Calu3 (cell line): ENCODE measurements at regions of chr18 and their contacts with region 1.

Region 1: DNA sequence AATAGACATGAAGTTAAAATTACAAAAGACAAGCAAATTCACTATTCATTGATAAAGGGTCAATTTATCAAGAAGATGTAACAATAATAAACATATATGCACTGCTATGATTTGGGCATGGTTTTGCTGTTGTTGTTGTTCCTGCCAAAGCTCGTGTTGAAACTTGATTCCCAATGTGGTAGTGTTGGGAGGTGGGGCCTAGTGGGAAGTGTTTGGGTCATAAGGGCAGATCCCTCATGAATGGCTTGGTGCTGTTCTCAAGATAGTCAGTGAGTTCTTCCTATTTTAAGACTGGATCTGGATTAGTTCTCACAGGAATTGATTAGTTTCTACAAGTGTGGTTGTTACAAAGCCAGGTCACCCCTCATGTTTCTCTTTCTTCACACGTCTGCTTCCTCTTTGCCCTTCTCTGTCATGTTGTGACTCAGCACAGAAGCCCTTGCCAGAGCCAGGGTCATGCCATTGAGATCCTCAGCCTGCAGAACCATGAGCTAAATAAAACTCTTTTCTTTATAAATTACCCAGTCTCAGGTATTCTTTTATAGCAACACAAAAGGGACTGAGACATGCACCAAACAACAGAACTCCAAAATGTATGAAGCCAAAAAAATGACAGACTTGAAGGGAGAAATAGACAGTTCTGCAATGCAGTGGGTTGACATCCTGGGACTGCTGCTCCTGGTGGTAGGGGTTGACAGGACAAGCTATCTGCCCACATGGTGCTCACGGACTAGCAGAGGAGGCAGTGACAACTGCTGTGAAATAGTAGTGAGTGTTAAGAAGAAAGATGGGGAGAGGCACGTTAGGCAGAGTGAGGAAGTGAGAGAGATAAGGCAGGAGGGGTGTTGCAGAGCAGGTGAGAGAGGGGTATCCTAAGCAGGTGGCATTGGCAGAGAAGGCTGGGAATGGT is 18.6 kb upstream of the SKA1 start:
- DNase-seq: peak; percentile 23
- H3K4me3 Mint-ChIP-seq: no peak overlapping the region
- H3K27ac Mint-ChIP-seq: peak overlapping the region; percentile 58
- H3K4me1 Mint-ChIP-seq: peaks cover 14% of the 10 kb centered on the region
- H3K27me3 Mint-ChIP-seq: peaks cover 33% of the 10 kb centered on the region
- CTCF ChIP-seq: no peak

Region 2: DNA sequence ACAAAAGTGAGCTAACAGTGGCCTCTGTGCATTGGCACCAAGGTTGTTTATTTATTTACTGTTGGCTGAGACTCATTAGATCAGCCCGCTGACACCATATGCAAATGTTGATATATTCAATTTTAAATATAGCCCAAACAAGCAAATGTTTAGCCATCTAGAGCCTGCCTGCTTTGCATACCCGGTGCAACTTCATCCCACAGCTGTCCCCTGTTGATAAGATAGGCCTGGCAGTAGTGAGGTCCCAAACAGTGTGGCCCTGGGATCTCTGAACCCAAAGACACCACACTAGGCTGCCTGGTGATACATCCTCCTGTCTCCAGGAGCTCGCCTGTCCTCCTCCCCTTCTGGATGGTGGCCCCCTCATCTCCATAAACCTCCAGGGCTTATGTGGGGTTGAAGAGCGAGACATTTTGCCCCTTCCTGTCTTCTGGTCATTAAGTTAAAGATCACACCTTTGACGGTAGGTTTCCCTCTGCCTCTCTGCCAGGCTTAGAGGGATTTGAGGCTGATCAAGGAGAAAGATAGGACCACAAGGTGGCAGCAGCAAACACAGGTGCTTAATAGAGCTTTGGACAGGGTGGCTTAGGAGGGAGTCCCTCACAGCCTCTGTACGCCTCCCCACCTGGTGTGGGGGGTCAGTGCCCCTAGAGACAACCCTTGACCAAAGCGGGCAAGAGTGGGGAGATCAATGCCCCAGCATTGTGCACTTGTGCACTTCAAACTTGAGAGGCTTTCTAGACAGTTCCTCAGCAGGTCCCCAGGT is 137.7 kb before region 1 on chr18:
- CTCF ChIA-PET with region 1: interaction called, 55 read pairs
- intact Hi-C with region 1: loop called (anchors 1 kb)
- DNase-seq: peak; percentile 57
- H3K4me3 Mint-ChIP-seq: no peak overlapping the region
- H3K27ac Mint-ChIP-seq: no peak overlapping the region
- H3K4me1 Mint-ChIP-seq: peaks cover 43% of the 10 kb centered on the region
- H3K27me3 Mint-ChIP-seq: peaks cover 44% of the 10 kb centered on the region
- CTCF ChIP-seq: peak; percentile 64

Region 3: GRCh38 chr18:50281295-50281971 is 74.9 kb before region 1 on chr18 and contains the start of gene MBD1:
- CTCF ChIA-PET with region 1: interaction called, 11 read pairs
- intact Hi-C with region 1: loop called (anchors 5 kb)
- DNase-seq: peak; percentile 96
- H3K4me3 Mint-ChIP-seq: peak within 1 kb of the TSS; percentile 90
- H3K27ac Mint-ChIP-seq: peak within 1 kb of the TSS; percentile 89
- H3K4me1 Mint-ChIP-seq: peaks cover 35% of the 10 kb centered on the region
- H3K27me3 Mint-ChIP-seq: no peaks in the 10 kb centered on the region
- CTCF ChIP-seq: no peak
- total RNA-seq, gene MBD1: 70.5 and 88.0 TPM in 2 replicates

Region 4: DNA sequence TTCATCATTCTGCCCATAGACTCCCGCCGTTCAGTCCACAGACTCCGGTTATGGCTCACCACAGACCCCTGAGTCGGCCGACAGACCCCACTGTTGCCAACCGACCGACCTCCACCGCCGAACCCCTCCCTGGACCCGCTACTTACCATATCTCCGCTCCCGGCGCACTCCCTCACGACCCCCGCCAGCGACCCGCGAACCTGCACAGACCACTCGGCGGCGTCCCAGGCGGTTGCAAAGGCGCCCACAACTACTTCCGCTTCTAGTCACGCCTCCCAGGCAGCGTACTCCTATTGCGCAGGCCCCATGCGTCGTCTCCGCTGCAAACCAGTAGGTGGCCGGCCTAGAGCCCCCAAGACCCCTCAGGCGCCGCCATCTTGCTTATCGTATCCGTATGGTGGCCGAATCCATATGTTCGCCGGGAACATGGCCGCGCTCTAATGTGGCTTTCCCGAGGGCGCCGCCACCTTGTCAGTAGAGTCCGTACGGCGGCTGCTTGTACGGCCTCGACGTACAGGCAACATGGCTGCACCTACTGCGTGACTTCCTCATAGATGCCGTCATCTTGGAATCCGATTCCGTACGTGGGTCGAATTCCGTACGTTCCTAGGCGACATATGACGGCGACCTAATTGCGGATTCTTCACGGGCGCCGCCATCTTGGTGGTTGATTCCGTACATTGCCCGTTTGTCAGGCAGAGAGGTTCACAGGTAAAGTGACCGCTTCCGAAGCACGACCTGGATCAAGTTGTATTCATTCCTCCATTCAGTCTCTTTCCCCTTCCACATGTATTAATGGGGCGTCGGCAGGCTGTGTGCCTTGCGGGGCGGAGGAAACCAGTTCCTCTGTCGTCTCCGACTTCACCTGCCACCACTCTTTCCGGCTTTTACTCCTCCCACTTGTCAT is 68.6 kb before region 1 on chr18 and contains the start of gene CXXC1:
- CTCF ChIA-PET with region 1: interaction called, 3 read pairs
- intact Hi-C with region 1: loop called (anchors 5 kb)
- DNase-seq: peak; percentile 96
- H3K4me3 Mint-ChIP-seq: peak within 1 kb of the TSS; percentile 89
- H3K27ac Mint-ChIP-seq: peak within 1 kb of the TSS; percentile 80
- H3K4me1 Mint-ChIP-seq: peaks cover 28% of the 10 kb centered on the region
- H3K27me3 Mint-ChIP-seq: no peaks in the 10 kb centered on the region
- CTCF ChIP-seq: peak; percentile 63
- total RNA-seq, gene CXXC1: 75.1 and 95.2 TPM in 2 replicates

Region 5: GRCh38 chr18:50307738-50308470 is 48.4 kb before region 1 on chr18:
- CTCF ChIA-PET with region 1: interaction called, 10 read pairs
- intact Hi-C with region 1: no loop called
- DNase-seq: peak; percentile 88
- H3K4me3 Mint-ChIP-seq: peak overlapping the region; percentile 81
- H3K27ac Mint-ChIP-seq: peak overlapping the region; percentile 64
- H3K4me1 Mint-ChIP-seq: peaks cover 35% of the 10 kb centered on the region
- H3K27me3 Mint-ChIP-seq: no peaks in the 10 kb centered on the region
- CTCF ChIP-seq: no peak

Region 6: DNA sequence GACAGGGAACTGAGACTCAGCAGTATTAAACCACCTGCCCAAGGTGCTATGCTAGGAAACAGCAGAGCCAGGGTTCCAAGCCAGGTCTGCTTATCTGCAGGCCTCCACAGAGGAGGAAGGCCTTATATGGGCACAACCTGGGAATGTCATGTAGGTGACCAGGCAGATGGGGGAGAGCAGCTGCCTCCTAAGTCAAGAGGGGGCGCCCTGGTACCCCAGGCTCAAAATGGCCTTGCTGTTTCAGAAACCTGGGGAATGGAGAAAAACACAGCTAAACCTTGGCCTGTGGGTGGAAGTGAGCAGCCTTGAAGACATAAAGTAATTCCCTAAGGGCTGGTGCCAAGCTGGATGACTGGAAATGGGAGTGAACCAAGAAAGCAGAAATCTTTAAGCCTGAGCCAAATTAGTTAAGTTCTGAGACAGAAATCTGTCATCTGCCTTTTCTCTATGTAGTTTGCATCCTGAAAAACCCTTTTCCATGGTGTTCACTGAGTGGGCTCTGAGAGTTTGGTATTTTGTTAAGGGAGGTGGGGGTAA is 282.7 kb after region 1 on chr18:
- CTCF ChIA-PET with region 1: no interaction called
- intact Hi-C with region 1: no loop called
- DNase-seq: no peak
- H3K4me3 Mint-ChIP-seq: no peak overlapping the region
- H3K27ac Mint-ChIP-seq: no peak overlapping the region
- H3K4me1 Mint-ChIP-seq: no peaks in the 10 kb centered on the region
- H3K27me3 Mint-ChIP-seq: peaks cover 47% of the 10 kb centered on the region
- CTCF ChIP-seq: no peak